ENCODE measurements at regions of chr7 and their contacts with region 1.

Region 1: GRCh38 chr7:114930829-114931655 is 9.1 kb downstream of the MDFIC start:
- DNase-seq: no peak
- ATAC-seq: peak; percentile 45
- H3K4me3 Mint-ChIP-seq: no peak overlapping the region
- H3K27ac Mint-ChIP-seq: no peak overlapping the region
- H3K4me1 Mint-ChIP-seq: peaks cover 34% of the 10 kb centered on the region
- H3K27me3 Mint-ChIP-seq: no peaks in the 10 kb centered on the region

Region 2: GRCh38 chr7:114851406-114852061 is 79.5 kb before region 1 on chr7:
- CTCF ChIA-PET with region 1: no interaction called
- POLR2A ChIA-PET with region 1: no interaction called
- intact Hi-C with region 1: no loop called
- DNase-seq: no peak
- ATAC-seq: no peak
- H3K4me3 Mint-ChIP-seq: no peak overlapping the region
- H3K27ac Mint-ChIP-seq: no peak overlapping the region
- H3K4me1 Mint-ChIP-seq: peaks cover 7% of the 10 kb centered on the region
- H3K27me3 Mint-ChIP-seq: peaks cover 2% of the 10 kb centered on the region

Region 3: DNA sequence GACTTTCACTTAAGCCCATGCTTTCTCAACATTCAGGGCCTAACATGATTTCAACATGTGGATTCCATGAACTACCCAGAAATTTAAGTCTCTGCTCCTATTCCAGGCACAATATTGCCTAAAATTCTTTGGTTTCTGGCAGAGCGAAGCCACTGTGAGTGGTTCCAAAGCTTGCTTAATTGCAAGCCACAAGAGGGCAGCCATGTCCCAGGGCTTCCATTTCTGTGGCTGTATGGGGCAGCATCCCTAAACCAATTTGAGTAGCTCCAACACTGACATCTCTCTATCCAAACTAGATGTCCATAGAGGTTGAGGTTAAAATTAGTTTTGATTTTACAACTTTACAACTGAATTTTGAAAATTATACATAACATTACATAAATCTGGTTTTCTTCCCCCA is 65.5 kb before region 1 on chr7:
- CTCF ChIA-PET with region 1: interaction called, 3 read pairs
- POLR2A ChIA-PET with region 1: no interaction called
- intact Hi-C with region 1: loop called in 1 of 2 experiments (anchors 2 kb)
- DNase-seq: peak; percentile 77
- ATAC-seq: peak; percentile 75
- H3K4me3 Mint-ChIP-seq: no peak overlapping the region
- H3K27ac Mint-ChIP-seq: no peak overlapping the region
- H3K4me1 Mint-ChIP-seq: peaks cover 6% of the 10 kb centered on the region
- H3K27me3 Mint-ChIP-seq: no peaks in the 10 kb centered on the region

Region 4: GRCh38 chr7:114916261-114916892 is 14.7 kb before region 1 on chr7:
- CTCF ChIA-PET with region 1: interaction called, 4 read pairs
- POLR2A ChIA-PET with region 1: no interaction called
- intact Hi-C with region 1: loop called (anchors 1 kb)
- DNase-seq: peak; percentile 74
- ATAC-seq: peak; percentile 91
- H3K4me3 Mint-ChIP-seq: peak overlapping the region; percentile 44
- H3K27ac Mint-ChIP-seq: peak overlapping the region; percentile 94
- H3K4me1 Mint-ChIP-seq: peaks cover 59% of the 10 kb centered on the region
- H3K27me3 Mint-ChIP-seq: no peaks in the 10 kb centered on the region

Region 5: GRCh38 chr7:116316833-116317612 is 1386.0 kb after region 1 on chr7:
- CTCF ChIA-PET with region 1: no interaction called
- POLR2A ChIA-PET with region 1: no interaction called
- intact Hi-C with region 1: loop called in 1 of 2 experiments (anchors 10 kb)
- DNase-seq: peak; percentile 66
- ATAC-seq: peak; percentile 95
- H3K4me3 Mint-ChIP-seq: no peak overlapping the region
- H3K27ac Mint-ChIP-seq: peak overlapping the region; percentile 38
- H3K4me1 Mint-ChIP-seq: peaks cover 14% of the 10 kb centered on the region
- H3K27me3 Mint-ChIP-seq: peaks cover 16% of the 10 kb centered on the region